SK-N-SH (cell line): ENCODE measurements at regions of chr17 and their contacts with region 1.

Region 1: GRCh38 chr17:74457146-74457819 is 9.2 kb upstream of the CD300A start:
- DNase-seq: peak; percentile 89
- H3K4me3 ChIP-seq: peak overlapping the region in 1 of 2 experiments; percentile 56; a peak in 1 of 4 replicates
- H3K27ac ChIP-seq: no peak overlapping the region
- H3K4me1 ChIP-seq: peaks cover 0 to 19% of the 10 kb centered on the region in 2 experiments; a peak in 2 of 4 replicates
- H3K27me3 ChIP-seq: no peaks in the 10 kb centered on the region
- CTCF ChIP-seq: peak; percentile 91
- EP300 ChIP-seq: no peak
- RAD21 ChIP-seq: peak; percentile 99

Region 2: DNA sequence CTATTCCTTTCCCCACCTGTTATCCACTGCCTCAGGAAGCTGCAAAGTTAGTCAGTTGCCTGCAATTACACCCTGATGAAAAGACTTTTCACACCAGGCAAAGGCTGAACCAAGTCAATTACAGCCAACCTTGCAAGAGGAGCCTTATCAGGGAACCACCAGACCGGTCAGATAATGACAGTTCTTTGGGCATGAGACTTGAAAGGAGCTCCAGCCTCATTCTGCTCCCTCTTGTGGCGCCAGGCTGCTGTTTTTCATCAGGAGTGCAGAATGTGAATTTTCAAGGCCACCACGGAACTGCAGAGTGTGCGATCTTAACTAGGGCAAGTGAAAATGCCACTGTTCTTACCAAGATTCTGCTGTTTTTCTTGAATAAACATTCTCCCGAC is 160.7 kb before region 1 on chr17:
- CTCF ChIA-PET with region 1: interaction called, 39 read pairs
- POLR2A ChIA-PET with region 1: no interaction called
- DNase-seq: peak; percentile 76
- H3K4me3 ChIP-seq: no peak overlapping the region; a peak in 1 of 4 replicates
- H3K27ac ChIP-seq: no peak overlapping the region
- H3K4me1 ChIP-seq: peaks cover 0 to 3% of the 10 kb centered on the region in 2 experiments; a peak in 1 of 4 replicates
- H3K27me3 ChIP-seq: no peaks in the 10 kb centered on the region
- CTCF ChIP-seq: peak; percentile 16; the same call in 1 of the 2 replicates
- EP300 ChIP-seq: no peak
- RAD21 ChIP-seq: peak; percentile 76

Region 3: GRCh38 chr17:74354123-74354522 is 103.2 kb before region 1 on chr17:
- CTCF ChIA-PET with region 1: interaction called, 48 read pairs
- POLR2A ChIA-PET with region 1: no interaction called
- DNase-seq: peak; percentile 94
- H3K4me3 ChIP-seq: no peak overlapping the region
- H3K27ac ChIP-seq: no peak overlapping the region
- H3K4me1 ChIP-seq: peaks cover 0 to 2% of the 10 kb centered on the region in 2 experiments; a peak in 1 of 4 replicates
- H3K27me3 ChIP-seq: no peaks in the 10 kb centered on the region
- CTCF ChIP-seq: no peak
- EP300 ChIP-seq: no peak
- RAD21 ChIP-seq: peak; percentile 54

Region 4: DNA sequence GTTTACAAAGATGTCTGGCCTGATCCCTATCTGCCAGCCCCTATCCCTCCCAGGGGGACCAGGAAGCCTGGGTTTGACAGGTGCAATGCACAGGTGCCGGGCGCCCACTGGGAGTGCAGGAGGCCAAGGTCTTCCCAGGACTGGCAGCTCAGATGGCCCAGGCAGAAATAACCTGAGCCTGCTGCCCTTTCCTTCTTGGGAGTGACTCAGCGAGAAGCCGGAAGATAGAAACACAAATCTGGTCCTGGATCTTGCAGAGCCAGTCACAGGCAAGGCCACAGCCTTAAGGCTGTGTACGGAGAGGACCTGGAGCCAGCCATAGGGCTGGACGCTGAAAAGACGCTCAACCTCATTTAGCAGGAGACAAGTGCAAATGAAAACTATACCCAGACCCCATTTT is 62.3 kb before region 1 on chr17:
- CTCF ChIA-PET with region 1: interaction called, 67 read pairs
- POLR2A ChIA-PET with region 1: interaction called, 3 read pairs
- DNase-seq: no peak
- H3K4me3 ChIP-seq: no peak overlapping the region
- H3K27ac ChIP-seq: no peak overlapping the region
- H3K4me1 ChIP-seq: no peaks in the 10 kb centered on the region; a peak in 1 of 4 replicates
- H3K27me3 ChIP-seq: no peaks in the 10 kb centered on the region
- CTCF ChIP-seq: no peak
- EP300 ChIP-seq: no peak
- RAD21 ChIP-seq: no peak

Region 5: GRCh38 chr17:74424657-74425056 is 32.6 kb before region 1 on chr17:
- CTCF ChIA-PET with region 1: interaction called, 23 read pairs
- POLR2A ChIA-PET with region 1: interaction called, 3 read pairs
- DNase-seq: peak; percentile 39
- H3K4me3 ChIP-seq: no peak overlapping the region
- H3K27ac ChIP-seq: no peak overlapping the region
- H3K4me1 ChIP-seq: no peaks in the 10 kb centered on the region
- H3K27me3 ChIP-seq: no peaks in the 10 kb centered on the region
- CTCF ChIP-seq: no peak
- EP300 ChIP-seq: no peak
- RAD21 ChIP-seq: no peak

Region 6: DNA sequence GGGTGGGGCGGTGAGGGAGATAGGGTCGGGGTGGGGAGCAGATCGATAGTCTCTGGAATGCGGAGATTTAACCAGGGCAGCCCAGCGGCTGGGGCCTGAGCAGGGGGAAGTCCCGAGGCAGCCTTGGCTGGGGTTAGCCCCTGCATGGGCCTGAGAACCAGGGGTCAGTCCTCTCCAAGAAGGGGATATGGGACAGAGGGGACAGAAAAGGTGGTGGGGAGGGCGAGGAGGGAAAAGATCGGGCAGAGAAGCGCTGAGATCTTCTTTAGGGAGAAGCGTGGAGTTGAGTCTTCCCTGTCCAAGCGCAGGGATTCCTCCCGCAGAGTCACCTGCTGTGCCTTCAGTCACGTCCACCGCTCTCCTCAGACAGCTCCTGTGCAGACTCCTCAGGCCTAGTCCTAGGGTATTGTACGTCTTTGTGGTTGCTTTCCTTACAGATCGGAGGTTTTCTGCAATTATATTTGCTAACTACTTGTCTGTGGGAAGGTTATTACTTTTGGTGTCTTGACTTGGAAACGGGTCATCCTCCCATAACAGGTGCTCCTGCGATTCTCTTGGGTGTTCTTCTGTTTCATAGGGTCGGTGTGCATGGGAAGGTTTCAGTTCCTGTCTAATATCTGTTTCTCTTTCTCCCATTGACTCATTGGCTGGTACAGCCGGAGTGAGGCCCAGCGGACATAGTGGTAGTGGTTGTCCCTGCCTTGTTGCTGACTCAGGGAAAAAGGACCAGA is 10.1 kb after region 1 on chr17:
- CTCF ChIA-PET with region 1: interaction called, 122 read pairs
- POLR2A ChIA-PET with region 1: no interaction called
- DNase-seq: no peak
- H3K4me3 ChIP-seq: no peak overlapping the region
- H3K27ac ChIP-seq: no peak overlapping the region
- H3K4me1 ChIP-seq: no peaks in the 10 kb centered on the region
- H3K27me3 ChIP-seq: no peaks in the 10 kb centered on the region
- CTCF ChIP-seq: no peak
- EP300 ChIP-seq: no peak
- RAD21 ChIP-seq: no peak

Region 7: GRCh38 chr17:74502861-74503260 is 45.6 kb after region 1 on chr17:
- CTCF ChIA-PET with region 1: interaction called, 15 read pairs
- POLR2A ChIA-PET with region 1: no interaction called
- DNase-seq: no peak
- H3K4me3 ChIP-seq: no peak overlapping the region
- H3K27ac ChIP-seq: no peak overlapping the region
- H3K4me1 ChIP-seq: no peaks in the 10 kb centered on the region
- H3K27me3 ChIP-seq: no peaks in the 10 kb centered on the region
- CTCF ChIP-seq: no peak
- EP300 ChIP-seq: no peak
- RAD21 ChIP-seq: no peak